CD8-positive, alpha-beta T cell (primary cell): ENCODE measurements at regions of chr17 and their contacts with region 1.

Region 1: GRCh38 chr17:82051776-82052637 is at the starts of genes GPS1 and RFNG:
- DNase-seq: peak; percentile 49 to 87 (median 82)
- ATAC-seq: peak; percentile 92
- H3K4me3 ChIP-seq: peak within 1 kb of the TSS; percentile 63 to 67
- H3K4me3 Mint-ChIP-seq: peak within 1 kb of the TSS; percentile 83
- H3K27ac ChIP-seq: peak within 1 kb of the TSS; percentile 25 to 30
- H3K27ac Mint-ChIP-seq: peak within 1 kb of the TSS; percentile 72
- H3K4me1 ChIP-seq: peaks cover 29% of the 10 kb centered on the region
- H3K4me1 Mint-ChIP-seq: peaks cover 18% of the 10 kb centered on the region
- H3K27me3 ChIP-seq: no peaks in the 10 kb centered on the region
- H3K27me3 Mint-ChIP-seq: no peaks in the 10 kb centered on the region
- CTCF ChIP-seq: no peak
- total RNA-seq, gene GPS1: 72.0 to 72.8 TPM
- total RNA-seq, gene RFNG: 26.2 to 27.2 TPM

Region 2: DNA sequence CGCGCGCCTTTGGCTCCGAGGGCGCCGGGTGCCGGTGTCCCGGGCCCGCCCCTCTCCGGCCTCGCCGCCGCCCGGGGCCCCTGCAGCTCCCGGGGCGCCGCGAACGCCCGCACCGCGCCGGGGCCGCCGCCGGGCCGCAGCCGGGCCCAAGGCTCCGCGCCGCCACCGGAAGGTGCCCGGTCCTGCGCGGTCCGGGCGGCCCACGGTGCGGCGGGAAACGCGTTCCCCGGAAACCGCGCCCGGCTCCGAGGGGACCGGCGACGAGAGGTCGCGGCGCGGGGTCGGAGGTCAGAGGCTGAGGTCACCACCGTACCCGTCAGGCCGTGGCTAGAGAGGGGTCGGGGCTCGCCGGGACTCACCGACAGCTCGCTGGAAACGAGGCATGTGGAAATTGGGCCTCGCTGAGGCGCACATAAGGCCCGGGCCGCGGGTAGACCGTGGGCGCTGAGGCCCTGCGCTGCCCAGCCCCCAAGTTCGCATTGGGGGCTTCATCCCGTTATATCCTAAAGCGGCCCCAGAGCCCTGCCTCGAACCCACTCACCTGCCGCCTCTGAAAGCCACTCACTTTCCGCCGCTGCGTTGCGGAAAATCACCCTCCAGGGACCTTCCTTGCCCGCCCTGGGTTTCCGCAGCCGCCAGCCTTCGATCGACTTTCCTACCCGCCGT is 13.8 kb after region 1 on chr17 and contains the start of gene DUS1L:
- CTCF ChIA-PET with region 1: no interaction called
- POLR2A ChIA-PET with region 1: interaction called, 16 read pairs
- intact Hi-C with region 1: loop called (anchors 1 kb)
- DNase-seq: peak; percentile 44 to 86 (median 68)
- ATAC-seq: peak; percentile 87
- H3K4me3 ChIP-seq: peak within 1 kb of the TSS; percentile 79 to 87
- H3K4me3 Mint-ChIP-seq: peak within 1 kb of the TSS; percentile 82
- H3K27ac ChIP-seq: peak within 1 kb of the TSS; percentile 70 to 91
- H3K27ac Mint-ChIP-seq: peak within 1 kb of the TSS; percentile 92
- H3K4me1 ChIP-seq: peaks cover 20% of the 10 kb centered on the region
- H3K4me1 Mint-ChIP-seq: peaks cover 14% of the 10 kb centered on the region
- H3K27me3 ChIP-seq: no peaks in the 10 kb centered on the region
- H3K27me3 Mint-ChIP-seq: no peaks in the 10 kb centered on the region
- CTCF ChIP-seq: no peak
- total RNA-seq, gene DUS1L: 159 to 174 TPM

Region 3: GRCh38 chr17:82134101-82134500 is 82.1 kb after region 1 on chr17:
- CTCF ChIA-PET with region 1: no interaction called
- POLR2A ChIA-PET with region 1: no interaction called
- intact Hi-C with region 1: no loop called
- DNase-seq: no peak
- ATAC-seq: no peak
- H3K4me3 ChIP-seq: no peak overlapping the region
- H3K4me3 Mint-ChIP-seq: no peak overlapping the region
- H3K27ac ChIP-seq: no peak overlapping the region
- H3K27ac Mint-ChIP-seq: peak overlapping the region; percentile 27
- H3K4me1 ChIP-seq: peaks cover 5% of the 10 kb centered on the region
- H3K4me1 Mint-ChIP-seq: peaks cover 4% of the 10 kb centered on the region
- H3K27me3 ChIP-seq: no peaks in the 10 kb centered on the region
- H3K27me3 Mint-ChIP-seq: no peaks in the 10 kb centered on the region
- CTCF ChIP-seq: no peak

Region 4: DNA sequence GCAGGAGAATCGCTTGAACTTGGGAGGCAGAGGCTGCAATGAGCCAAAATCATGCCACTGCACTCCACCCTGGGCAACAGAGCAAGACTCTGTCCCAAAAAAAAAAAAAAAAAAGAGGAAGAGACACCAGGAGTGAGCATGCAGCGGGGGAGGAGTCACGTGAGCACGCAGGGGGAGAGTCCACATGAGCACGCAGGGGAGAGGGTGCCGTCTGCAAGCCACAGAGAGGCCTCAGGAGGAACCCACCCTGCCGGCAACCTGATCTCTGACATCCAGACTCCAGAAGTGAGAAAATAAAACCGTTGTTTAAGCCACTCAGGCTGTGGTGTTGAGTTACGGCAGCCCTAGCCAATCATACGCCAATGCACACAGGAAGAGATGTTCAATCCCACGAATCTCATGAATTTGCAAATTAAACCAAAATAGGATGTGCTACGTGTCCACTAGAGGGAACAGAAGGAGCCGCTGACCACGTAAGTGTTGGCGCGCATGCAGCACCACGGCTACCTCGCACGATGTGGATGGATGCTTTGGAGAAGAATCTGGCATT is 118.5 kb after region 1 on chr17:
- CTCF ChIA-PET with region 1: no interaction called
- POLR2A ChIA-PET with region 1: no interaction called
- intact Hi-C with region 1: no loop called
- DNase-seq: no peak
- ATAC-seq: no peak
- H3K4me3 ChIP-seq: no peak overlapping the region
- H3K4me3 Mint-ChIP-seq: no peak overlapping the region
- H3K27ac ChIP-seq: no peak overlapping the region
- H3K27ac Mint-ChIP-seq: no peak overlapping the region
- H3K4me1 ChIP-seq: no peaks in the 10 kb centered on the region
- H3K4me1 Mint-ChIP-seq: no peaks in the 10 kb centered on the region
- H3K27me3 ChIP-seq: no peaks in the 10 kb centered on the region
- H3K27me3 Mint-ChIP-seq: no peaks in the 10 kb centered on the region
- CTCF ChIP-seq: no peak